Activated CD4-positive, alpha-beta T cell treated with anti-CD3 and anti-CD28 coated beads for 36 hours (primary cell): ENCODE measurements at regions of chr22 and their contacts with region 1.

Region 1: DNA sequence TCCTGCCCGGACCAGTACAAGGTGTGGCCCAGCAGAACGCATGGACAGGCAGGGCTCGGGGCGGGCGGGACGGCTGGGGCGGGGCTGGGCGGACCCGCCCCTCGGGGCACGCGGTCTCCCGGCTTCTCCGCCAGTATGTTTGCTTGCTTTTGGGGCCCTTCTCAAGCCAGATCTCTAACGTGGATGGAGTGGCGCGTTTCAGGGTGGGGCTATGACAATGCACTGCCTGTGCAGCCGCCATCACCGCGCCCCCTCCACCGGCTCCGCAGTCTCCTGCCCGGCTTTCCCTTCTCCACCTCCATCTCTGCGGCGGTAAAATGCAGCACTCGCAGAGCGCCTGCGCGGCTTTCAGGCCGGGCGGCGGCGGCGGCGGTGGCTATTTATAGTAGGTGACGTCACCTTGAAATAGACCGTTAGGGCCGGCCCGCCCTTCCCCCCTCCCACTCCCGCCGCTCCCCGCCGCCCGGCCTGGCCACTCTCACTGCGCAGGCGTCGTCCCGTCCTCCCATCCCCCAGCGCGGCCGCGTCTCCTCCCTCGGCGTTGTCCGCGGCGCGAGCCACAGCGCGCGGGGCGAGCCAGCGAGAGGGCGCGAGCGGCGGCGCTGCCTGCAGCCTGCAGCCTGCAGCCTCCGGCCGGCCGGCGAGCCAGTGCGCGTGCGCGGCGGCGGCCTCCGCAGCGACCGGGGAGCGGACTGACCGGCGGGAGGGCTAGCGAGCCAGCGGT is at the start of gene YWHAH:
- DNase-seq: peak; percentile 96
- ATAC-seq: peak; percentile 73
- H3K4me3 Mint-ChIP-seq: no peak within 1 kb of the TSS
- H3K27ac Mint-ChIP-seq: peak within 1 kb of the TSS; percentile 84
- H3K4me1 Mint-ChIP-seq: peaks cover 21% of the 10 kb centered on the region
- H3K27me3 Mint-ChIP-seq: no peaks in the 10 kb centered on the region
- total RNA-seq, gene YWHAH: 83.2 to 98.5 TPM

Region 2: GRCh38 chr22:31399211-31400028 is 544.7 kb before region 1 on chr22 and contains the start of gene DRG1:
- CTCF ChIA-PET with region 1: no interaction called
- POLR2A ChIA-PET with region 1: no interaction called
- intact Hi-C with region 1: loop called in 1 of 2 experiments (anchors 1 kb)
- DNase-seq: peak; percentile 99
- ATAC-seq: peak; percentile 98
- H3K4me3 Mint-ChIP-seq: peak within 1 kb of the TSS; percentile 99
- H3K27ac Mint-ChIP-seq: peak within 1 kb of the TSS; percentile 91
- H3K4me1 Mint-ChIP-seq: peaks cover 18% of the 10 kb centered on the region
- H3K27me3 Mint-ChIP-seq: peaks cover under 1% of the 10 kb centered on the region
- total RNA-seq, gene DRG1: 104 to 106 TPM

Region 3: GRCh38 chr22:31676700-31677099 is 267.4 kb before region 1 on chr22:
- CTCF ChIA-PET with region 1: no interaction called
- POLR2A ChIA-PET with region 1: no interaction called
- intact Hi-C with region 1: loop called in 1 of 2 experiments (anchors 1 kb)
- DNase-seq: peak; percentile 95
- ATAC-seq: peak; percentile 100
- H3K4me3 Mint-ChIP-seq: peak overlapping the region; percentile 76
- H3K27ac Mint-ChIP-seq: peak overlapping the region; percentile 89
- H3K4me1 Mint-ChIP-seq: peaks cover 13% of the 10 kb centered on the region
- H3K27me3 Mint-ChIP-seq: no peaks in the 10 kb centered on the region

Region 4: DNA sequence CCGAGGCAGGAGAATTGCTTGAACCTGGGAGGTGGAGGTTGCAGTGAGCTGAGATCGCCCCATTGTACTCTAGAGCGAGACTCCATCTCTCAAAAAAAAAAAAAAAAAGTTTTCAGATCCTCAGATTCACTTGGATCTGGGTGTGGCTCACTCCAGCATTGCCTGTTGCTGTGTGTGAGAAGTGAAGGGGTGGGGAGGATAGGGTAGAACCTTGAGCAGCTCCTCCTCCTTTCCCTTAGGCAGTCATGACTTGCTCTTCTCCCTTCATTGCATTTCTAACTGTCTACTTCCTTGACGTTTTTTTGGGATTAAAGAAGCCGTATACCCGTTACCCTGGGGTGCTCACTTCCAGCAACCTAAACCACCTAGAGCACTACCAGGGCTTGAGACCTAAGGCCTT is 62.9 kb before region 1 on chr22:
- CTCF ChIA-PET with region 1: no interaction called
- POLR2A ChIA-PET with region 1: no interaction called
- intact Hi-C with region 1: no loop called
- DNase-seq: no peak
- ATAC-seq: no peak
- H3K4me3 Mint-ChIP-seq: no peak overlapping the region
- H3K27ac Mint-ChIP-seq: no peak overlapping the region
- H3K4me1 Mint-ChIP-seq: no peaks in the 10 kb centered on the region
- H3K27me3 Mint-ChIP-seq: no peaks in the 10 kb centered on the region

Region 5: GRCh38 chr22:32411829-32412592 is 467.9 kb after region 1 on chr22 and contains the start of gene RTCB:
- CTCF ChIA-PET with region 1: no interaction called
- POLR2A ChIA-PET with region 1: no interaction called
- intact Hi-C with region 1: loop called in 1 of 2 experiments (anchors 1 kb)
- DNase-seq: peak; percentile 95
- ATAC-seq: peak; percentile 83
- H3K4me3 Mint-ChIP-seq: peak within 1 kb of the TSS; percentile 93
- H3K27ac Mint-ChIP-seq: peak within 1 kb of the TSS; percentile 95
- H3K4me1 Mint-ChIP-seq: peaks cover 41% of the 10 kb centered on the region
- H3K27me3 Mint-ChIP-seq: no peaks in the 10 kb centered on the region
- total RNA-seq, gene RTCB: 60.9 to 86.3 TPM

Region 6: DNA sequence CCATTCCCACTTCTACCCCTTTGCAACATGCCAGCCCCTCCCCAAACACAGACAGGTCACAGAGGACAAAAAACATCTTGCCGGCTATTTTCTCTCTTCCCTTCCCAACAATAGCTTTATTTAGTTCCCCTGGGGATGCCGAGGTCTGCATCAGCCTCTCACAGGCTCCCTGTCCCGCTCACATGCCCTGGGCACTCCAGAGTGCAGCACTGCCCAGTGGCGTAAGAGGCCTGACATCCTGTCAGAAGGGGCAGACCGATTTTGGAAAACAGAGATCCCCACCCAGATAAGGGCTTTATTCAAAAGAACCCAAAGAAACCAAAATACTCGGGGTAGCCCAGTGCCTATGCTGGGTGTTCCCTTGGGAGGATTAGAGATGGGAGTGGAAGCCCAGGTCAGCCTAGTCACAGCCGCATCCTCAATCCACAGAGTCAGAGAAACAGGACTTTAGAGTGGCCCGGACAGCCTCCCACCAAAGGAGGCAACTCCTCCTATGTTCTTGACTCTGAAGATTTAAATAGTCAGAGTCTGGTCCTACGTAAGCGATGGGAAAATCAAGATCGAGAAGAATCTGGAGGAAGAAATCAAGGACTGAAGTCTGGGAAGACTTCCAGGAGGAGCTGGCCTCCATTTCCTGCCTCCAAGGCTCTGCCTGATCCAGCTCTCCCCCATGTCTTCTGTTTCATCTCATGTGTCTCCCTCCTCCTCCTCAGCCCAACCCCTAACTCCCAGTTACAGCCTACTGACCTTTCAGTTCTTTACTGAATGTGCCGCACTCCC is 659.7 kb after region 1 on chr22:
- CTCF ChIA-PET with region 1: no interaction called
- POLR2A ChIA-PET with region 1: no interaction called
- intact Hi-C with region 1: no loop called
- DNase-seq: no peak
- ATAC-seq: no peak
- H3K4me3 Mint-ChIP-seq: no peak overlapping the region
- H3K27ac Mint-ChIP-seq: no peak overlapping the region
- H3K4me1 Mint-ChIP-seq: peaks cover 8% of the 10 kb centered on the region
- H3K27me3 Mint-ChIP-seq: no peaks in the 10 kb centered on the region